ENCODE measurements at regions of chr1 and their contacts with region 1.

Region 1: GRCh38 chr1:154558575-154559465 is at the start of gene UBE2Q1:
- DNase-seq: peak; percentile 99
- H3K4me3 Mint-ChIP-seq: peak within 1 kb of the TSS; percentile 87
- H3K27ac Mint-ChIP-seq: peak within 1 kb of the TSS; percentile 81
- H3K4me1 Mint-ChIP-seq: peaks cover 43% of the 10 kb centered on the region
- H3K27me3 Mint-ChIP-seq: no peaks in the 10 kb centered on the region
- total RNA-seq, gene UBE2Q1: 118 to 122 TPM

Region 2: GRCh38 chr1:154519591-154519991 is 39.2 kb before region 1 on chr1:
- CTCF ChIA-PET with region 1: no interaction called
- POLR2A ChIA-PET with region 1: no interaction called
- DNase-seq: no peak
- H3K4me3 Mint-ChIP-seq: no peak overlapping the region
- H3K27ac Mint-ChIP-seq: no peak overlapping the region
- H3K4me1 Mint-ChIP-seq: peaks cover 2% of the 10 kb centered on the region
- H3K27me3 Mint-ChIP-seq: peaks cover 48% of the 10 kb centered on the region

Region 3: GRCh38 chr1:154607609-154608396 is 49.0 kb after region 1 on chr1 and contains the start of gene ADAR:
- CTCF ChIA-PET with region 1: interaction called, 13 read pairs
- POLR2A ChIA-PET with region 1: interaction called, 4 read pairs
- DNase-seq: peak; percentile 95
- H3K4me3 Mint-ChIP-seq: peak within 1 kb of the TSS; percentile 94
- H3K27ac Mint-ChIP-seq: peak within 1 kb of the TSS; percentile 98
- H3K4me1 Mint-ChIP-seq: peaks cover 69% of the 10 kb centered on the region
- H3K27me3 Mint-ChIP-seq: no peaks in the 10 kb centered on the region
- total RNA-seq, gene ADAR: 377 to 398 TPM

Region 4: DNA sequence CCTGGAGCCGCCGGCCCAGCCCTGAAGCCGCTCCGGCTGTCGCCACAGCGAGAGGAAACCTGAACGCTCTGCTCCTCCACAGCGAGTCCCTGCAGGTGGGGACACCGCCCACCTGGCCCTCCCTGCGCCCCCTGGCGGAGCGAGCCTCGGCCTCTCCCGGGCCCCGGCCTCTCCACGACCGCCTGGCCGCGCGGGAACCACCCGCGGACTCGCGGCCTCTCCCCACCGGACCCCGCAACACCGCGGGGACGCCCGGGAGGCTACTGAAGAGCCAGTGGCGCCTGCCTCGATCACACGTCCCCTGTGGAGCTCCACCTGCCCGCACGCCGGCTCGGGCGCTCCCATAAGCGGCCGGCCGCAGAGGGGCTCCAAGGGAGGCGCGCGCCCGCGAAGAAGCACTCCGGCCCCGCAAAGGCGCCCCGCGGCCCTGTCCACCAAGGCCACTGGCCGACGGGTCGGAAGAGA is 201.7 kb after region 1 on chr1:
- CTCF ChIA-PET with region 1: interaction called, 19 read pairs
- POLR2A ChIA-PET with region 1: no interaction called
- DNase-seq: peak; percentile 80
- H3K4me3 Mint-ChIP-seq: peak overlapping the region; percentile 40
- H3K27ac Mint-ChIP-seq: no peak overlapping the region
- H3K4me1 Mint-ChIP-seq: peaks cover 34% of the 10 kb centered on the region
- H3K27me3 Mint-ChIP-seq: peaks cover 36% of the 10 kb centered on the region

Region 5: DNA sequence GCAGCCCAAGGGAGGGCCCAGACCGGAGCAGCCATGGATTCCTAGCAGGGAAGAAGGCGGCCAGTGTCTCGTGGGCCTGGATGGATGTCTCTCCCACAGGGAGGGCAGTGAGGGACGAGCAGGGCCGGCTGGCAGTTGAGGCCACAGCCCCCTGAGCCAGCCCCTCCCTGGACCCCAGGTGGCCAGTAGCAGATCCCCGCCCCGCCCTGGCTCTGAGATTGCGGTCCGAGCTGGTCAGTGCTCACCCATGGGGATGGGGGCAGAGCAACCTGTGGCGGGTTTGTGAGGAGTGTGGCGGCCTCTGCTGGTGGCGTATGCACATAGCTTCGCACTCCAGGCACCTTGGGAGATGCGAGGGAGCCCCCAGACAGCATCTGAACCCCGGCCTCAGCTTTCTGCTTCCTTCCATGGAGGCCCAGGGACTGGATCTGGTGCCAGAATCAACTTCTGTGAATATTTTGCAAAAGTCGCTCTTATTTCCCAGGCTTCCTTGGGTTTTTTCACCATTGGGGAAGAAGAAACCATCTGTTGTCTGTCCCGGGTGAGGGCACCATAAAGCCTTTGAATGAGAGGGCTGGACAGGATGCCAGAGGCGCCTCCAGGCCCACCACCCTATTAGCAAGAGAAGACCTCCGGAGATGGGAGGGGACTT is 319.7 kb after region 1 on chr1:
- CTCF ChIA-PET with region 1: interaction called, 18 read pairs
- POLR2A ChIA-PET with region 1: interaction called, 5 read pairs
- DNase-seq: peak; percentile 78
- H3K4me3 Mint-ChIP-seq: no peak overlapping the region
- H3K27ac Mint-ChIP-seq: no peak overlapping the region
- H3K4me1 Mint-ChIP-seq: peaks cover 11% of the 10 kb centered on the region
- H3K27me3 Mint-ChIP-seq: peaks cover 21% of the 10 kb centered on the region

Region 6: DNA sequence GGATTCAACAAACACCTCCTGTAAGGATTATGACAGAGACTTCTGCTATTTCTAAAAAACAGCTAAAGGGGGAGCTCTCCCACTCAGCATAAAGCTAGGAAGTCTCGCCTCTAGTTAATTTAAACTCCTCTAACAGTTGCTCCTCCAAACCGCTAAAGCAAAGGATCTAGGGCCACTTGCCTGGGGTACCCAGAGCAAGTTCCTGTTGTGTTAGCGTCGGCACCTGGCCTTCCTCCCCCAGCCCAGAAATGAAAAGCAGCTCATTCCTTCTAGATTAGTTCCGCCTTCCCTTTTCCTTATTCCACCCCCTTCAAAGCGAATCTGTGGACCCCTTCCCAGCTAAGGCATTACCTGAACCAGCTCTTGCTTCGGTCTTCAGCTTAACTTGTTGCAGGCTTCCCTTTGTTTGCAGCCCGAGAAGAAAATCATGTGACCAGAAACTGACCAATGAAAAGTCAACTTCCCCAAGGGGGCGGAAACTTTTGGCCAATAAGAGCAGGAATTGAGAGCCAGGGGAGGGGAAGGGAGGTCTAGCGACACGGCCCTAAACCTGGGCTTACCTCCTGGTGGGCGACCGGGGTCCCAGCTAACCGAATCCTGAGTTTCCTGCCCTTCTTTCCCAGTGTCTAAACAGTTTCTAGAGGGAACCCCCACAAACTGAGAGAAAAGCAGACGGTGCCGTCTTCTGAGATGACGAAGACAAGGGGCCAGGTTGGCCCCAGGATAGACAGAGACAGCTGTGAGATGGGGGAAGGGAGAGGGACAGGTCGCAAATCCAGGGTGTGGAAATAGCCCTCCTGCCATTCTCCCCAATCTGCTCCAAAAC is 397.1 kb after region 1 on chr1 and contains the start of gene PBXIP1:
- CTCF ChIA-PET with region 1: interaction called, 10 read pairs
- POLR2A ChIA-PET with region 1: no interaction called
- DNase-seq: peak; percentile 88
- H3K4me3 Mint-ChIP-seq: peak within 1 kb of the TSS; percentile 96
- H3K27ac Mint-ChIP-seq: peak within 1 kb of the TSS; percentile 97
- H3K4me1 Mint-ChIP-seq: peaks cover 85% of the 10 kb centered on the region
- H3K27me3 Mint-ChIP-seq: no peaks in the 10 kb centered on the region
- total RNA-seq, gene PBXIP1: 169 TPM

Region 7: DNA sequence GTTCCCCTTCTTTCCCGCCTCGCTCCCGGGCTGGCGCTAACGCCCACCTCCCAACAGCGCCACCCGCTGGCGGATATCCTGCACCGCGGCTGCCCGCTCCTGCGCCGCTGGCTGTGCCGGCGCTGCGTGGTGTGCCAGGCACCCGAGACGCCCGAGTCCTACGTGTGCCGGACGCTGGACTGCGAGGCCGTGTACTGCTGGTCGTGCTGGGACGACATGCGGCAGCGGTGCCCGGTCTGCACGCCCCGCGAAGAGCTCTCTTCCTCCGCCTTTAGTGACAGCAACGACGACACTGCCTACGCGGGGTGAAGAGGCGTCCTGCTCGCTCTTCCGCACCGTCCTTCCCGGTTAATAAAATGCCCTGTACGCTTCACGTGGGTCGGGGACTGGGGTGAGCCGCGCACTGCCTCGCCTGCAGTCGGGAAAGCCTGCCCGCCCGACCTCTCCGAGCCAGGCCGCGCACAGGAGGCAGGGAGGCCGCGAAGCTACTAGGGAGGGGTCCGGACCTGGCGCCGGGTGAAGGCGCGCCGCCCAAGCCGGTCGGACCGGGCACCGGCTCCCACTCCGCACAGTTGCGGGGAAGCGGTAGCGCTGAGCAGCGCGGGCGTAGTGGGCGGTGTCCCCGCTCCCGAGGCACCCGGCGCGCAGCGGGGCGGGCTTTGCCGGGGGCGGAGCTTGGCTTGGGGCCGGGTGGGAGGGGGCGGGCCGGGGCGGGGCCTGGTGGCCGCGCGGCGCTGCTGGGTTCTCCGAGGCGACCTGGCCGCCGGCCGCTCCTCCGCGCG is 491.9 kb after region 1 on chr1 and contains the start of gene ADAM15:
- CTCF ChIA-PET with region 1: interaction called, 10 read pairs
- POLR2A ChIA-PET with region 1: no interaction called
- DNase-seq: peak; percentile 86
- H3K4me3 Mint-ChIP-seq: peak within 1 kb of the TSS; percentile 84
- H3K27ac Mint-ChIP-seq: peak within 1 kb of the TSS; percentile 80
- H3K4me1 Mint-ChIP-seq: peaks cover 30% of the 10 kb centered on the region
- H3K27me3 Mint-ChIP-seq: no peaks in the 10 kb centered on the region
- total RNA-seq, gene ADAM15: 73.9 to 76.4 TPM

Measured in activated CD4-positive, alpha-beta memory T cell treated with anti-CD3 and anti-CD28 coated beads, Interleukin-2, amount 10 ng/mL, durations not matched to agents 7 days and 5 days (primary cell).